Motor neuron (in vitro differentiated cells): ENCODE measurements at regions of chr1 and their contacts with region 1.

Region 1: DNA sequence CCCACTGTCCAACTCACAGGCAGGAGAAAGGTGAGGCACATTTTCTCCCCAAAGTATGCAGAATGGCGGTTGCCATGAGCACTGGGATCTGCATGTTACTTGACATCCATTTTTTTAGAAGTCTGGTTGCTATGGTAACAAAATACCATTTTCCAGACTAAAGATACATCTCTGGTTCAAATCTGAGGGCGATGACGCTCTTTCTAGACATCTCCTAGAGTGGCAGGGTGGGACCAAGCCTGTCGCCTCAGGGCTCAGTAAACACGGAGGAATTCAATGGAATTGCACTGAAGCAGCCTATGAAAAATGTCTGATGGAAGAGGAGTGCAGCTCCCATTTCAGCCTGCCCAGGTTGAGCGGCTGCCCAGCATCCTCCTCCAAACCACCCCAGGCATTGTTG is 21.5 kb upstream of the FAM43B start:
- ATAC-seq: peak in 6 of 8 experiments; percentile 36 to 95 (median 66)
- H3K4me3 ChIP-seq: no peak overlapping the region
- H3K27ac ChIP-seq: no peak overlapping the region
- H3K4me1 ChIP-seq: peaks cover 5 to 6% of the 10 kb centered on the region in 2 donors

Region 2: DNA sequence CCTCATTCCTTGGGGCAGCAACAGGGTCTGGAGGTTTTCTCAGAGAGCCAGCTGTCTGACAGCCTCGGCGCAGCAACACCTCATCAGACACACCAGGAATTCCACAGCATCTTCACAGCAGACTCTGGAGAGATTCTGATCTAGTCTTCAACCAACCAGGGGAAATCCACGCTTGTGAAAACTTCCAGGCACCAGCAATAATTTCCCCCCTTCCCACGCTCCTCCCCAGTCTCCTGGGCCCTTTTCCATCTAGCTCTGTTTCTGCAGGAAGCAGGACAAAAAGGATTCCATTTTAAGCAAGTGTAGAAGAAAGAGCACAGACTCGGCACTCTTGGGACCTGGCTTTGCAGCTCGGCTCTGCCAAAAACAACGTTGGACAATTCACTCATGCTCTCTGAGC is 1001.2 kb before region 1 on chr1:
- in situ Hi-C with region 1: no loop called
- ATAC-seq: no peak
- H3K4me3 ChIP-seq: no peak overlapping the region
- H3K27ac ChIP-seq: no peak overlapping the region
- H3K4me1 ChIP-seq: no peaks in the 10 kb centered on the region

Region 3: DNA sequence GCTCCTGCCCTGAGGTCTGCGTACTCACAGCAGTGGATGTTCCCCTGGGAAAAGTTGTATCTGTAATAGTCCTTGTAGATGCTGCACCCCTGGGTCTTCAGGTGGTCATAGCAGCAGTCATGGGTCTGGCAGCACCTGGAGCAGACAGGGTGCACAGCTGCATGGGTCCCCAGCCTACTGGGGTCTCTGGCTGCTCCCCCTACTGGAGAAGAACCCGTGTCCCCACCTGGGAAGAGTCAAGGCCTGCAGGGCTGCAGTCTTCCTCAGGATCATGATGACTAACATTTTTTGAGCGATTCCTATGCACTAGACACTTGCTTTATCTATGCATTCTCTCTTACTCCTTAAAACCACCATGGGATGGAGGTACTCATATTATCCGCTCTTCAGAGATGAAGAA is 415.4 kb before region 1 on chr1:
- in situ Hi-C with region 1: no loop called
- ATAC-seq: no peak
- H3K4me3 ChIP-seq: no peak overlapping the region
- H3K27ac ChIP-seq: no peak overlapping the region
- H3K4me1 ChIP-seq: no peaks in the 10 kb centered on the region

Region 4: GRCh38 chr1:20640183-20640597 is 109.3 kb after region 1 on chr1:
- in situ Hi-C with region 1: loop called in 5 of 9 experiments (anchors 5 to 25 kb)
- ATAC-seq: peak; percentile 39 to 90 (median 58)
- H3K4me3 ChIP-seq: no peak overlapping the region
- H3K27ac ChIP-seq: no peak overlapping the region
- H3K4me1 ChIP-seq: no peaks in the 10 kb centered on the region

Region 5: DNA sequence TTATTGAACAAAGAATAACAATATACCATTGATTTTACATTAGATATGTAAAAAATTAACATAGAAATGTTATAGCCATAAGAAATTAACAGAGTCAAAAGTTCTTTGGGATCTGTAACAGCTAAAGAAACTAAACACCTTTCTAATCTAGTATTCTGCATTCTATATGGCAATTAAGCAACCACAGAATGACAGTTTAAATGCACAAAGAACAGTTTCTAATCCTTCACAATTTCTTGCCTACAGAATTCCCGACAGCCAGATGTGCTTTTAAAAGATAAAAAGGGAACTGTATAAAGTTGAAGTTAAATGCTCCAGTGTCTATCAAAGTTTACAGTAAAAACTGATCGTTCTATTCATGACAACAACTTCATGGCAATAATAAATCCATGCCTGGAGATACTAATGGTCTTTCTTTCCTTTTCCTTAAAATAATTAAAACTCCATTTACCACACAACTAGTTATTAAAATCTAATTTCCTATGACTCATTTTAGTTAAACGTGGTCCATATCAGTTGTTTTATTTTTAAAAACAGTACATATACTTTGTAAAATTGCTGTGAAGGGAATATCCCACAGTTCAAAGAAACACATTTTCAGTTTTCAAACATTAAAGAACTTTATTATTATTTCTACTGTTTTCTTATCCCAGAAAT is 535.6 kb after region 1 on chr1:
- in situ Hi-C with region 1: no loop called
- ATAC-seq: peak in 1 of 8 experiments; percentile 83
- H3K4me3 ChIP-seq: no peak overlapping the region
- H3K27ac ChIP-seq: no peak overlapping the region
- H3K4me1 ChIP-seq: no peaks in the 10 kb centered on the region

Region 6: GRCh38 chr1:21176586-21177555 is 646.0 kb after region 1 on chr1 and contains the start of gene EIF4G3:
- in situ Hi-C with region 1: loop called in 2 of 9 experiments (anchors 25 kb)
- ATAC-seq: peak; percentile 94 to 98 (median 96)
- H3K4me3 ChIP-seq: peak within 1 kb of the TSS; percentile 57 to 87 (median 68)
- H3K27ac ChIP-seq: peak within 1 kb of the TSS; percentile 89 to 97
- H3K4me1 ChIP-seq: peaks cover 0 to 9% of the 10 kb centered on the region in 2 donors
- total RNA-seq, gene EIF4G3: 57.4 to 114 (median 72.9) TPM